ENCODE measurements at regions of chr16 and their contacts with region 1.

Region 1: DNA sequence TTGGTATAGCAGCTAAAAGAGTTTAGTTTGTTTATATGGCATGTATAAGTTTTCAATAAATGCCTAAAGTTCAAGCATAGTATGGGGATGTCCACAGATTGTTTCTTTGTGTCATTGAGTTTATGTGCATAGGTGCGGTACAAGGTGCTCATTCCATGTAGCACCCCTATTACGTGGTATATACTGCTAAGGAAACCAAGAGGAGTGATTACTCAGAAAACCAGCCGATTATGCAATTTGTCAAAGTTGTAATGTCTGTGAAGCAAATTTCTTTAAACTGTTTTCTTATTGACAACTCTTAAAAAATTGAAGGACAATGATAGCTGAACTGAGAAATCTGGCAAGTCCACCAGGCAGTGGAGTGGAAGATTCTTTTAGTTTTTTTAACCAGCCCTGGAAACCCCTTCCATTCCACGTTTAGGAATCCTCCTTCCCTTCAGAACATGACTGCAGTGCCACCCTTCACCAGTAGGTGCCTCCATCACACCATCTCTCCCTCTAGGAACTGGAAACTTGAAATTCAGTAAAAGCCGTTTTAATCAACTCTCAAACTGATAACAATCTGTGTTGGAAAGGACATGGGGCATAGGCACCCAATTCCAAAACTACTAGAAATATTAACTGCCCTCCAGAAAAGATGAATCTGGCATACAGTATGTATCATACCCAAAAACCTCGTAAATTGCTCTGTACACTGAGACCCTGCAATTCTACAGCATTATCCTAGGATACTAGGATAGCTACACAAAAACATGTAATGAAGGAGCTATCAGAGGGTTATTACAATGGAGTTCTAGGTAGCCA is 43.5 kb downstream of the REXO5 start:
- DNase-seq: peak; percentile 59
- H3K4me3 ChIP-seq: no peak overlapping the region
- CTCF ChIP-seq: peak; percentile 100

Region 2: DNA sequence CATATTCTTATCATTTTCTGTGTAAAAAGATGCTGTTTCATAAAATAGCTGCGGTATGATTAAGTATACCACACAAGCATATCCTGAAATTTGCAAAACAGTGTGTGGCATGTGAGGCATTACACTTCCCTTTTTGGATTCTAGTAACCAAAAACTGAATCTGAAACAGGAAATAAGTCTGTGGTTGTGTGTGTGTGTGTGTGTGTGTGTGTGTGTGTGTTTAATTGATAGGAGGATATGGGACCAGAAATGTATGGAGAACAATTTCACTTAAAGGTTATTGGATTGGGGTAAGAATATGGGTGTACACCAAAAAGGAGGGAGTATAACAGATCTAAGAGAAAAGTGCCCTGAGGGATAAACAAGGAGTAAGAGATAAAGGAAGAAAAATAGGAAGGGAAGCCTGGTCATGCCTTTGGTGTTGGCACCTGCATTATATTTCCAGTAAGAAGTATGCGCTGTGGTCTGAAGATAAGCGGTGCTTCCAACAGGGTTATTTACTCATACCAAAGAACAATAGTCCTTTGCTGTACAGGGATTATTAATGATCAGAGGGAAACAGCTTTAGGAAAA is 54.8 kb after region 1 on chr16:
- in situ Hi-C with region 1: loop called (anchors 5 kb)
- DNase-seq: peak; percentile 82
- H3K4me3 ChIP-seq: no peak overlapping the region
- CTCF ChIP-seq: no peak

Region 3: GRCh38 chr16:21184834-21185233 is 335.0 kb after region 1 on chr16:
- in situ Hi-C with region 1: loop called (anchors 10 kb)
- DNase-seq: no peak
- H3K4me3 ChIP-seq: no peak overlapping the region
- CTCF ChIP-seq: no peak

Region 4: DNA sequence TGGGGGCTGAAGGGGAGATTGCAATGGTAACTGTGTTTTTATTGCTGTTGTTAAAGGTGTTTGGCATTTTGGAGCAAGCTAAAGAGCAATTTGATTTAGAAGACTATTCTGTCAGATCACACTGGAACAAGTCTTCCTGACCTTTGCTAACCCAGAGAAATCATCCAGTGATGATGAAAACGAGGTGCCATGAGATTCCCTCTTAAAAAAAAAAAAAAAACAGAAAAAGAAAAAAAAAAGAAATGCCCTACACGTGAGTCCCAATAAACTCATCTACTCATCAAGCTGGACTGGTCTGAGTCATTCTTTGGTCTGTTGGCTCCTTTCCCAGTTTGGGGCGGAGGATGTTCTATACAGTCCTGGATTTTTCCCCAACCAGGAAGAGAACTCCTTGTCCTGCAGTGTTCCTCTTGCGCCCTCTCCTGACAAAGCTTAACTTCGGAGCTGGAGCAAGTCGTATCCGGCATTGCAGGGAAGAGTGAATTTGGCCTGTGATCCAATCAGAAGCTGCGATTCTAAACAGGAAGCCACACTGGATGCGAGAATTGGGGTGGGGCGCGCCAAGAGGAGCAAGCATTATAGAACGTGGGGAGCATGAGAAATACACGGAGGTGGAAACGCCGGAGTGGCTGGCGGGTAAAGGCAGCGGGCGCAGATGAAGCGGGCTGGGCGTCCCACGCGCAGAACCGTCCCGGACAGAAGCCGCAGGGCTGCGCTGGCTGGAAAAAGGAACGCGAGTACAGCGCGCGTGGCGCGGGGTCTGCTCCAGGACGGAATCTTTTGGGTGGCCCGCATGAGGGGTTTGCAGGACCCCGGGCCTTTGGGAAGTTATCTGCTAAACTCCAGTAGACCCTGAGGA is 450.7 kb after region 1 on chr16:
- in situ Hi-C with region 1: loop called (anchors 5 kb)
- DNase-seq: peak; percentile 100
- H3K4me3 ChIP-seq: peak overlapping the region; percentile 62
- CTCF ChIP-seq: peak; percentile 95